CD14-positive monocyte (primary cell): ENCODE measurements at regions of chr9 and their contacts with region 1.

Region 1: DNA sequence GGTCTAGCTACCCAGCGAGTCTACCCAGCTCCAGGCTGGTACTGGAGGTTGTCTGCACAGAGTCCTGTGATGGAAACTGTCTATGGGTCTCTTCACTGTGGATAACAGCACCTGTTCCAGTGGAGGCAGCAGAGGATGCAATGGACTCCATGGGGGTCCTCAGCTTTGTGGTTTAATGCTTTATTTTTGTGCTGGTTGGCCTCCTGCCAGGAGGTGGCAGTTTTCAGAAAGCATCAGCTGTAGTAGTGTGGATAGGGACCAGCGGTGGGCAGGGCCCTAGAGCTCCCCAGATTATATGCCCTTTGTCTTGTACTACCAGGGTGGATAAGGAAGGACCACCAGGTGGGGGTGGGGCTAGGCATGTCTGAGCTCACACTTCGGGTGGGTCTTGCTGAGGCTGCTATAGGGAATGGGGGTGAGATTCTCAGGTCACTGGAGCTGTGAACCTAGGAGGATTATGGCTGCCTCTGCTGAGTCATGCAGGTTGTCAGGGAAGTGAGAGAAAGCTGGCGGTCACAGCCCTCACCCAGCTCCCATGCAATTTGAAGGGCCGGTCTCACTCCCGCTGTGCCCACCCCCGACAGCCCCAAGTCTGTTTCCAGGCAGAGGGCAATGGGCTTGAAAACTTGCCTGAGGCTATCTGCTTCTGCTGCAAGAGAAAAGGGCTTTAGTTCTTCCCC is 397.2 kb downstream of the TLE1 start:
- DNase-seq: no peak
- H3K4me3 ChIP-seq: no peak overlapping the region
- H3K4me3 Mint-ChIP-seq: no peak overlapping the region
- H3K27ac ChIP-seq: no peak overlapping the region
- H3K27ac Mint-ChIP-seq: no peak overlapping the region
- H3K4me1 ChIP-seq: no peaks in the 10 kb centered on the region
- H3K4me1 Mint-ChIP-seq: peaks cover 3% of the 10 kb centered on the region
- H3K27me3 ChIP-seq: no peaks in the 10 kb centered on the region
- H3K27me3 Mint-ChIP-seq: peaks cover 0 to 1% (median under 1%) of the 10 kb centered on the region in 3 donors
- CTCF ChIP-seq: no peak

Region 2: DNA sequence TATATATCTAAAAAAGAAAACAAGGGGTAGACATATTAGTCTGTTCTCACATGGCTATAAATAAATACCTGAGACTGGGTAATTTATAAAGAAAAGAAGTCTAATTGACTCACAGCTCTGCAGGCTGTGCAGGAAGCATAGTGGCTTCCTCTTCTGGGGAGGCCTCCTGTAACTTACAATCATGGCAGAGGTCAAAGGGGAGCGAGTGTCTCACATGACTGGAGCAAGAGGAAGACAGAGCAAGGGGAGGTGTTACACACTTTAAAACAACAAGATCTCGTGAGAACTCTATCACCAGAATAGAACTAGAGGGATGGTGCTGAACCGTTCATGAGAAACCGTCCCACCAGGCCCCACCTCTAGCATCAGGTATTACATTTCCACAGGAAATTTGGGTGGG is 1103.6 kb before region 1 on chr9:
- intact Hi-C with region 1: loop called in 1 of 2 experiments (anchors 10 kb)
- DNase-seq: no peak
- H3K4me3 ChIP-seq: no peak overlapping the region
- H3K4me3 Mint-ChIP-seq: no peak overlapping the region
- H3K27ac ChIP-seq: no peak overlapping the region
- H3K27ac Mint-ChIP-seq: no peak overlapping the region
- H3K4me1 ChIP-seq: no peaks in the 10 kb centered on the region
- H3K4me1 Mint-ChIP-seq: no peaks in the 10 kb centered on the region
- H3K27me3 ChIP-seq: no peaks in the 10 kb centered on the region
- H3K27me3 Mint-ChIP-seq: peaks cover 0 to 2% (median 0%) of the 10 kb centered on the region in 3 donors
- CTCF ChIP-seq: no peak